ENCODE measurements at regions of chr10 and their contacts with region 1.

Region 1: DNA sequence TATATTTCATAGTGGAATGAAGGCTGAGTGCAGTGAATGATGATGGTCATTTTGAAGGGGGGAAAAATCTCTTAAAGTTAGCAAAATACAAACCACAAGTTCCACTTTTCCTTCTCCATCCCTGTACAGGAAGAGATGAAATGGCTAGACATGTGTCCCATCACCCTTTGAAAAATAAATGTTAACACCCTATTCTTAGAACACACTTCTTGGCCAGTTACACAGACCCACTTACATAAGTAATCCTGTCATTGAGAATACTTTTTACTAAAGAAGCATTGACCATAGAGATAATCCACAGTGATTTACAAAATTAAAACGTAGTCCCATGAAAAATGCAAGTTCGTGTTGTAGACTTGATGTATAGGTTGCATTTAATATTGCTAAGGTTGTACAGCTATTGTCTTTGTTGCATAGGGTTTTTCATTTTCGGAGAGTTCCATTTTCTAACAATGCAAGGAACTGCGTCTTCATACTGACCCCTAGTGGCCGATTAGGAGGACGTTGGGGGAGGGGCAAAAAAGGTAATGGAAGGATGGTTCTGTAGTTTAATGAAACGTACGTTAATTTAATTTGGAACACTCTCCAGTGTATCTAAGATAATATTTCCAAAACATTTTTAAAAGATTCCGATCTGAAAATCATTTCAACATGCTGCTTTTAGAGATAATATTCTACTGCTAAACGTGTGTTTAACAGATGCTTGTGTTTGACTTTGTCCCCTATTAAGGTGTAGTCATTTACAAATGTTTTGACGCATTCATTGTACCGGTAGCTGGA is 60.9 kb downstream of the ARMC3 start:
- DNase-seq: peak; percentile 57 to 79
- H3K4me3 ChIP-seq: no peak overlapping the region
- H3K4me3 Mint-ChIP-seq: peak overlapping the region; percentile 42
- H3K27ac Mint-ChIP-seq: no peak overlapping the region
- H3K4me1 ChIP-seq: peaks cover 8% of the 10 kb centered on the region
- H3K4me1 Mint-ChIP-seq: no peaks in the 10 kb centered on the region
- H3K27me3 ChIP-seq: no peaks in the 10 kb centered on the region
- H3K27me3 Mint-ChIP-seq: peaks cover 4% of the 10 kb centered on the region
- CTCF ChIP-seq: peak; percentile 95 to 97

Region 2: GRCh38 chr10:21989453-21990154 is 999.2 kb before region 1 on chr10:
- CTCF ChIA-PET with region 1: interaction called, 3 read pairs
- POLR2A ChIA-PET with region 1: no interaction called
- intact Hi-C with region 1: loop called (anchors 2 kb)
- DNase-seq: peak; percentile 74 to 75
- H3K4me3 ChIP-seq: no peak overlapping the region
- H3K4me3 Mint-ChIP-seq: no peak overlapping the region
- H3K27ac Mint-ChIP-seq: no peak overlapping the region
- H3K4me1 ChIP-seq: peaks cover 3% of the 10 kb centered on the region; the same call in 1 of the 2 replicates
- H3K4me1 Mint-ChIP-seq: peaks cover 7% of the 10 kb centered on the region
- H3K27me3 ChIP-seq: no peaks in the 10 kb centered on the region
- H3K27me3 Mint-ChIP-seq: no peaks in the 10 kb centered on the region
- CTCF ChIP-seq: peak; percentile 73 to 92

Region 3: GRCh38 chr10:22325272-22326144 is 663.3 kb before region 1 on chr10:
- CTCF ChIA-PET with region 1: interaction called, 3 read pairs
- POLR2A ChIA-PET with region 1: no interaction called
- intact Hi-C with region 1: loop called (anchors 10 kb)
- DNase-seq: peak; percentile 79 to 89
- H3K4me3 ChIP-seq: peak overlapping the region; percentile 62
- H3K4me3 Mint-ChIP-seq: peak overlapping the region; percentile 71
- H3K27ac Mint-ChIP-seq: peak overlapping the region; percentile 63
- H3K4me1 ChIP-seq: peaks cover 36% of the 10 kb centered on the region
- H3K4me1 Mint-ChIP-seq: peaks cover 21% of the 10 kb centered on the region
- H3K27me3 ChIP-seq: no peaks in the 10 kb centered on the region
- H3K27me3 Mint-ChIP-seq: peaks cover 2% of the 10 kb centered on the region
- CTCF ChIP-seq: no peak

Region 4: GRCh38 chr10:22505911-22506685 is 482.7 kb before region 1 on chr10:
- CTCF ChIA-PET with region 1: no interaction called
- POLR2A ChIA-PET with region 1: no interaction called
- intact Hi-C with region 1: no loop called
- DNase-seq: no peak
- H3K4me3 ChIP-seq: no peak overlapping the region
- H3K4me3 Mint-ChIP-seq: no peak overlapping the region
- H3K27ac Mint-ChIP-seq: no peak overlapping the region
- H3K4me1 ChIP-seq: no peaks in the 10 kb centered on the region; the same call in 1 of the 2 replicates
- H3K4me1 Mint-ChIP-seq: no peaks in the 10 kb centered on the region
- H3K27me3 ChIP-seq: no peaks in the 10 kb centered on the region
- H3K27me3 Mint-ChIP-seq: peaks cover 2% of the 10 kb centered on the region
- CTCF ChIP-seq: no peak

Region 5: DNA sequence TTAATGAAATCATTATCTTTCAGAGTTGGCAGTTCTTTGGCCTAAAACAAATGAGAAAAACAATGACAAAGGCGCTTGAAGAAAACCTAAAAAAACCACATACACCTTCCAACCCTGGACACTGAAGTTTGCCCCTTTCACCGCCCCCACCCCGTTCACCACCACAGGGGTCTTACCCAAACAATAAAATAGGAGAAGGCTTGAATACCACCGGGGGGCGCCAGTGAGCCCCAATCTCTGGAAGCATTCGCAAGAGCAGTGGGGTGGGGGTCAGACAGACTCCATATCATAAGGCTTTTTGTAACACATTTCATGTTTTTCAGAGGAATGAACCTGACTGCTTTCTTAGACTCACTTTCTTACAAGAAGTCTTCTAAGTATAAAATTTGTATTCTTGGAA is 438.0 kb before region 1 on chr10:
- CTCF ChIA-PET with region 1: no interaction called
- POLR2A ChIA-PET with region 1: no interaction called
- intact Hi-C with region 1: loop called (anchors 1 kb)
- DNase-seq: peak; percentile 56 to 72
- H3K4me3 ChIP-seq: no peak overlapping the region
- H3K4me3 Mint-ChIP-seq: no peak overlapping the region
- H3K27ac Mint-ChIP-seq: no peak overlapping the region
- H3K4me1 ChIP-seq: no peaks in the 10 kb centered on the region
- H3K4me1 Mint-ChIP-seq: no peaks in the 10 kb centered on the region
- H3K27me3 ChIP-seq: no peaks in the 10 kb centered on the region
- H3K27me3 Mint-ChIP-seq: no peaks in the 10 kb centered on the region
- CTCF ChIP-seq: peak; percentile 48 to 86

Region 6: DNA sequence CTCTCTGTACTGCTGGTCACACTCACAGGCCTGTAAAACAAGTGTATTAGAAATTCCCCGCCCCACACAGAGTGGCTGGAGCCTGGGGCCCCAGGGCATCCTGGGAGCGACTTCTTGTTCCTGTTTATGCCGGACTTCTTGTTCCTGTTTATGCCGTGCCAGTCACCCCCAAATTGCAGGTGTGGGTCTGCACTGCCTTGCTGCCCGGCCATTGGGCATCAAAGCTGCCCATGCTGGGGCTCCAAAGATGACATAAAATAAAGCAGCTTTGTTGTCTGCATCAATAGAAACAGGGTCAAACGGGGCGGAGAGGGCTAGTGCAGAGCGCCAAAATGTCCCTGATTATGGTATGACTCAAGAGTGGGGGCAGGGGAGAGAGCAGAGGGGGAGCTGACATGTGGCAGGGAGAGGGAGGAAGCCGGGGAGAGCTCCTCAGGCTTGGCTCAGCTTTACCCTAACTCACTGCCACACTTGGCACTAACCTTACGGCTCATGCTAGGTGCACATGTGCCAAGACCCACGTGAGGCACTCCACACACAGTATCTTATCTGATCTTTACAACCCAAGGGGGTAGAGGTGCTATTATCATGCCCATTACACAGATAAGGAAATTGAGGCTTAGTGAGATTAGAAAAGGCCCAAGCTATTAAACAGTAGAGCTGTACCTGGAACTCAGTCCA is 372.8 kb before region 1 on chr10:
- CTCF ChIA-PET with region 1: no interaction called
- POLR2A ChIA-PET with region 1: no interaction called
- intact Hi-C with region 1: loop called (anchors 2 kb)
- DNase-seq: no peak
- H3K4me3 ChIP-seq: no peak overlapping the region
- H3K4me3 Mint-ChIP-seq: no peak overlapping the region
- H3K27ac Mint-ChIP-seq: peak overlapping the region; percentile 15
- H3K4me1 ChIP-seq: peaks cover 56% of the 10 kb centered on the region
- H3K4me1 Mint-ChIP-seq: peaks cover 49% of the 10 kb centered on the region
- H3K27me3 ChIP-seq: no peaks in the 10 kb centered on the region
- H3K27me3 Mint-ChIP-seq: no peaks in the 10 kb centered on the region
- CTCF ChIP-seq: no peak

Region 7: DNA sequence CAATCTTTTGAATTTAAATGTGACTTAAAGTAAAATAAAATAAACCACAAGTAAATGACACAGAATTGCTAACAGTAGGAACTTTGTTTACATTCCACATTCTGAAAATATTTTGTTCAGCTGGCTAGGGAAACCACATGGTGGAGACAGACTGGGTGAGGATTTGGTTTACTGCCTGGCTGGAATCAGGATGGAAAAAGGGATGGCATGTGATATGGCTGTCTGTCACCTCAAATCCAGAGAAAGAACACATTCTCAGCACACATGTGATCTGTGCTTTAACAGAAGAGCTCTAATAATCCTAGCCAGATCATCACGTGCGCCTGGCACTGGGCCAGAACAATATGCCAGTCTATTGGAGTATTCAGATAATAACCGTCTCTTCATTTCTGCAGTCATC is 183.5 kb before region 1 on chr10:
- CTCF ChIA-PET with region 1: no interaction called
- POLR2A ChIA-PET with region 1: no interaction called
- intact Hi-C with region 1: loop called (anchors 5 kb)
- DNase-seq: peak in 1 of 2 experiments; percentile 30
- H3K4me3 ChIP-seq: no peak overlapping the region
- H3K4me3 Mint-ChIP-seq: no peak overlapping the region
- H3K27ac Mint-ChIP-seq: no peak overlapping the region
- H3K4me1 ChIP-seq: peaks cover 8% of the 10 kb centered on the region; the same call in 1 of the 2 replicates
- H3K4me1 Mint-ChIP-seq: peaks cover 24% of the 10 kb centered on the region
- H3K27me3 ChIP-seq: no peaks in the 10 kb centered on the region
- H3K27me3 Mint-ChIP-seq: no peaks in the 10 kb centered on the region
- CTCF ChIP-seq: peak in 1 of 2 experiments; percentile 20